ENCODE measurements at regions of chr9 and their contacts with region 1.

Region 1: GRCh38 chr9:136760424-136760823 is 2.4 kb upstream of the LCN8 start:
- DNase-seq: no peak
- H3K4me3 ChIP-seq: no peak overlapping the region
- H3K27ac ChIP-seq: no peak overlapping the region
- H3K27me3 ChIP-seq: peaks cover 12% of the 10 kb centered on the region
- CTCF ChIP-seq: no peak

Region 2: DNA sequence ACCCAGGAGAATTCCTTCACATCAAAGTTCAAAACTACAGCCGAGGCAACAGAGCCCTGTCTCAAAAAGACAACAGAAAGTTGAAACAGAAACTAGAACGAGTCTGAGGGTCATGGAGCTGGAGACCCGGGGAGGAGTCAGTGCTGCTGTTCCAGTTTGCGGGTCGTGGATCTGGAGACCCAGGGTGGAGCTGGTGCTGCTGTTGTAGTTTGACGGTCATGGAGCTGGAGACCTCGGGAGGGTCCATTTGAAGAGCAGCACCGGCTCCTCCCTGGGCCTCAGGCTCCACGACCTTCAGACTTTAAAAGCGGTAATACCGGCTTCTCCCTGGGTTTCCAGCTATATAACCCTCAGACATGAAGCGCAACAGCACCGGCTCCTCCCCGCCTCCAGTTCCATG is 16.9 kb after region 1 on chr9:
- CTCF ChIA-PET with region 1: interaction called, 11 read pairs
- POLR2A ChIA-PET with region 1: no interaction called
- DNase-seq: no peak
- H3K4me3 ChIP-seq: no peak overlapping the region
- H3K27ac ChIP-seq: no peak overlapping the region
- H3K27me3 ChIP-seq: peaks cover 35% of the 10 kb centered on the region
- CTCF ChIP-seq: no peak

Region 3: DNA sequence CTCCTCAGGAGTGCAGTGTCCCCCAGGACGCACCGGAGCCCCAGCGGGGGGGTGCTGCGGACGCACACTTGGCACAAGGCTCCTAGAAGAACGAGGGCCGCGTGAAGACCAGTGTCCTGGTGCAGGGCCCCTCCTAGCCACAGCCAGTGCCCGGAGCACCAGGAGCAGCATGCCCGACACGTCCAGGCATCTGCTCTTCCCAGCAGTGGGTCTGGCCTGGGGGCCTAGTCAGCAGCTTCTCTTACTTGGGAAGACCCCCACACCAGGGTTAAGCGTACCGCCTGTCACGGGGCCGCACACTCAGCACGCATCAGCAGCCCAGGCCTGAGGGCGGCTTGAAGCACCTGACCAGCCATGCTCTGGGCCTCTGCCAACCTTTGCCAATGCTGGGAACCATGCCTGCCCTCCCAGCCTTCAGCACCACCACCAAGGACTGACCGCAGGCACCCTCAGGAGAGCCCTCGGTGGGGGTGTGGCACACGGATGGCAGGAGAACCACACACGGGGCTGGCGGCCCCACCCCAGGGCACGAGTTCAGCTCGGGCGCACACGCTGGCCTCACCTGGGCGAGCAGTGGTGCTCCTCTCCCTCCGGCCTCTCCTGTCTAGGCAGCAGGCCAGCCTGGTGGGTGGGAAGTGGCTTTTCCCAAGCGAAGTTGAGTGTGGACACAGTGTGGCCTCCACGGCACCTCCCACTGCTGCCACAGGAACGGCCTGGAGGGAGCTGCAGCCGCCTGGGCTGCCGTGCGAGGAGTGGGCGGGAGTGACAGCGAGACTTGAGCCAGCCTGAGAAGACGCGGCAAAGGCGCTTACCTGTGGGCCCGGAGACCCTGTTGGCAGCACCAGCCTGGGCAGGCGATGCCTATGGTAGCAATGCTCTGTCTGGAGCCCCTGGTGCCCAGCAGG is 69.8 kb after region 1 on chr9:
- CTCF ChIA-PET with region 1: no interaction called
- POLR2A ChIA-PET with region 1: no interaction called
- DNase-seq: no peak
- H3K4me3 ChIP-seq: no peak overlapping the region
- H3K27ac ChIP-seq: no peak overlapping the region
- H3K27me3 ChIP-seq: no peaks in the 10 kb centered on the region
- CTCF ChIP-seq: no peak